Dendritic cell treated with granulocyte-macrophage colony-stimulating factor and Interleukin-4, amounts not matched to agents 40 ng/mL and 50 ng/mL, for 4 days (primary cell): ENCODE measurements at regions of chrX and their contacts with region 1.

Region 1: GRCh38 chrX:69538321-69538876 is 34.3 kb downstream of the NALF2 start:
- H3K4me3 Mint-ChIP-seq: peak overlapping the region; percentile 68
- H3K27ac Mint-ChIP-seq: peak overlapping the region; percentile 31
- H3K4me1 Mint-ChIP-seq: peaks cover 15% of the 10 kb centered on the region
- H3K27me3 Mint-ChIP-seq: peaks cover 17% of the 10 kb centered on the region

Region 2: GRCh38 chrX:69603566-69604194 is 65.3 kb after region 1 on chrX:
- intact Hi-C with region 1: no loop called
- H3K4me3 Mint-ChIP-seq: no peak overlapping the region
- H3K27ac Mint-ChIP-seq: no peak overlapping the region
- H3K4me1 Mint-ChIP-seq: no peaks in the 10 kb centered on the region
- H3K27me3 Mint-ChIP-seq: no peaks in the 10 kb centered on the region

Region 3: DNA sequence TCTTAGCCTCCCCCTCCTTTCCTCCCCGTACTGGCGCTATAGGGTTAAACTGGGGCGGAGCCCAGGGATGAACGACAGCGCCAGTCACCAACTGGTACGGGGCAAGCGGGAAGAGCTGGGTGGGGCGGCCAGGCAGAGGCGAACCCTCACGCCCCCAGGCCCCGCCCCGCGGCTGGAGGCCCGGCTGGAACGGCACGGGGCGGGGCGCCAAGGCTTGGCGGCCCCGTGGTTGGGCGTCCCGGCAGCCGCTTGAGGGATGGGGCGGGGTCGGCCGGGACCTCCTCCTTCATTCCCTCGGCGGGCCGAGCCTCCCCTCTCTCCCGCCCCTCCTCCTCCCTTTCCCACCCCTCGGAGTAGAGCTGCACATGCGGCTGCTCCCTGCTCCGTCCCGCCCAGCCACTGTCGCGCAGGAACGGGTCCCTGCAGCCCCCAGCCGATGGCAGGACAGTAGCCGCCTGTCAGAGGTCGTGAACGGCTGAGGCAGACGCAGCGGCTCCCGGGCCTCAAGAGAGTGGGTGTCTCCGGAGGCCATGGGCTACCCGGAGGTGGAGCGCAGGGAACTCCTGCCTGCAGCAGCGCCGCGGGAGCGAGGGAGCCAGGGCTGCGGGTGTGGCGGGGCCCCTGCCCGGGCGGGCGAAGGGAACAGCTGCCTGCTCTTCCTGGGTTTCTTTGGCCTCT is 77.5 kb after region 1 on chrX and contains the start of gene EDA:
- intact Hi-C with region 1: loop called (anchors 5 kb)
- H3K4me3 Mint-ChIP-seq: peak within 1 kb of the TSS; percentile 81
- H3K27ac Mint-ChIP-seq: peak within 1 kb of the TSS; percentile 51
- H3K4me1 Mint-ChIP-seq: peaks cover 5% of the 10 kb centered on the region
- H3K27me3 Mint-ChIP-seq: peaks cover 26% of the 10 kb centered on the region

Region 4: GRCh38 chrX:69627744-69628143 is 89.3 kb after region 1 on chrX:
- intact Hi-C with region 1: no loop called
- H3K4me3 Mint-ChIP-seq: no peak overlapping the region
- H3K27ac Mint-ChIP-seq: no peak overlapping the region
- H3K4me1 Mint-ChIP-seq: no peaks in the 10 kb centered on the region
- H3K27me3 Mint-ChIP-seq: no peaks in the 10 kb centered on the region

Region 5: DNA sequence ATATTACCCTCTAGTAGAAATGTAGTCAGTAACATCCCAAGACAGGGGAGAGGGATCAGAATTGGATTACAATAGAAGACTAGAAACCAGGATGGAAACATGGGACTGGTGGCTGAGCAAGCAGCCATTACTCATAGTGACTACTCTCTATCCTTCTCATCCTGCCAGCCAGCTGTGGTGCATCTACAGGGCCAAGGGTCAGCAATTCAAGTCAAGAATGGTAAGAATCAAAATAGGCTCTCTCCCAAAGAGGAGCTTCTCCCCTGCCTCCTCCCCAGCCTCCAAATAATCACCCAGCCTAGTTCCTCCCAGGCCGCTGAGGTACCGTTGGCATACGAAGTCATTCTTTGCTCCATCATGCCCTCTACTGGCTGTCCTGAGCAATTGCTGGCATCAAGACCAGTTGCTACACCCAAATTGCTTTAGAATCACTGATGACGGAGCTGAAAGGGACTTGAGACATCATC is 491.9 kb after region 1 on chrX:
- intact Hi-C with region 1: loop called (anchors 2 kb)
- H3K4me3 Mint-ChIP-seq: no peak overlapping the region
- H3K27ac Mint-ChIP-seq: no peak overlapping the region
- H3K4me1 Mint-ChIP-seq: no peaks in the 10 kb centered on the region
- H3K27me3 Mint-ChIP-seq: peaks cover 2% of the 10 kb centered on the region